ENCODE measurements at regions of chr5 and their contacts with region 1.

Region 1: DNA sequence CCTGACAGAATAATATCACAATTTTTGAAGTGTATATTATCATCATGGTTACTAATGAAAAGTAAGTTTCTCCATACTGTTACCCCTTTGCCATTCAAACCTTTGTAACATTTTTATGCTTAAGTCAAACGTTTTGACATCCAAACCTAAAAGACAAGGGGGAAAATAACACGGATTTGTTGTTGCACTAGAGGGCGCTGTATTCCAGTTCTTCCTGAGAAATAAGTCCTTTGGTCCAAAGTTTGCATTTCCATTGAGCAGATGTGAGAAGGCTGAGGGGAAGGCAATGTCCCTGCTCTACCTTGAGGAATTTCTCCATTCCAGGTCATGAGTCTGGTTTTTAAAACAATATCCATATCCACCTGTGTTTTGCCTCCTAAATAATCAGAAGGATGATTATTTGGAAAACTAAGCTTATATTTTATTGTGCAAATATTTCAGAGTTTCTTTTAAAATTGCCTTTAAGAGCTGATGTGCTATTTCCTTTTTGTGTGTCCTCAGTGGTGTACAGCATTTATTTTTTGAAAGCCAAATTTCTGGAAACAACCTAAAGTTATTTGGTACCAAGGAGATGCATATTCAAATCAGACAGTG is 9.7 kb downstream of the LECT2 start:
- DNase-seq: peak; percentile 49
- H3K4me3 Mint-ChIP-seq: no peak overlapping the region
- H3K27ac Mint-ChIP-seq: no peak overlapping the region
- H3K4me1 Mint-ChIP-seq: no peaks in the 10 kb centered on the region
- H3K27me3 Mint-ChIP-seq: peaks cover 10% of the 10 kb centered on the region

Region 2: DNA sequence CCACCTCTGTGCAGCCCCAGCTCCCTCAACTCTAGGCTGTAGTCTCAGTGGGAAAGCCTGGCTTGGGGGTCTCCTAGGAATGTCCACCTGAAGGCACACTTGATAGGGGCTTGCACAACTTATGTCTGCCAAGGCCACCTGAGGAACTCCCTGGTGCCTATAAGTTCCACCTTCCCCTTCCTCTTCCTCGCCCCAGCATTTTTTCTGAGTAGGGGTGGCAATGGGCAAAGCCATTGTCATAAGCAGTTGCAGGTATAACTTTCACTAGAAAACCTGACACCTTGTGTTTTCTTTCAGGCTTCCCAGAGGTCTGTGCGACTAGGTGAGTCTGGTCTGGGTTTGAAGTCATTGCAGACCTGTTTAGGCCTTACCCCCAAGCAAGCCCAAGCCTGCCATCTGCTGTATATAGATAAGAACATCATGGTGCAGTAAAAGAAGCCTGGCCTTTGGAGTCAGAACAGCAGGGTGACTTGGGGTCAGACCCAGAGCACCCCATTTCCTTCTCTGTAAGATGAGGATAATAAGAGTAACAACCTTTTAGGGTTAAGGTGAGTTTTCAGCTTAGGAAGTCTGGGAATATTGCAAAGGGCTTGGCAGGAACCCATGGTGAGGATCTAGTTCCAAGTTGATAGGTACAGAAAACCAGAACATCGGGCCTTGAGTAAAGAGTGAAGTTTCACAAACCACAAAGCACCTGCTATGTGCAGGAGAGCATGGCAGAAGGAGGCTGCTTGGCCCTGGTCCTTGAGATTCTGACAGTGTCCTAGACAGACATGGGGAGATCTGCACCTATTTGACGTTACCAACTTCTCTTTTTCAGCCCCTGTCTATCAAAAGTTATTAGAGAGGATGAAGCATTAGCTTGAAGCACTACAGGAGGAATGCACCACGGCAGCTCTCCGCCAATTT is 117.6 kb after region 1 on chr5:
- CTCF ChIA-PET with region 1: no interaction called
- intact Hi-C with region 1: loop called (anchors 1 kb)
- DNase-seq: peak; percentile 17
- H3K4me3 Mint-ChIP-seq: no peak overlapping the region
- H3K27ac Mint-ChIP-seq: no peak overlapping the region
- H3K4me1 Mint-ChIP-seq: no peaks in the 10 kb centered on the region
- H3K27me3 Mint-ChIP-seq: no peaks in the 10 kb centered on the region

Region 3: GRCh38 chr5:136080483-136081216 is 135.6 kb after region 1 on chr5:
- CTCF ChIA-PET with region 1: no interaction called
- intact Hi-C with region 1: loop called (anchors 1 kb)
- DNase-seq: peak; percentile 62
- H3K4me3 Mint-ChIP-seq: peak overlapping the region; percentile 12
- H3K27ac Mint-ChIP-seq: no peak overlapping the region
- H3K4me1 Mint-ChIP-seq: peaks cover 2% of the 10 kb centered on the region
- H3K27me3 Mint-ChIP-seq: peaks cover 23% of the 10 kb centered on the region

Region 4: DNA sequence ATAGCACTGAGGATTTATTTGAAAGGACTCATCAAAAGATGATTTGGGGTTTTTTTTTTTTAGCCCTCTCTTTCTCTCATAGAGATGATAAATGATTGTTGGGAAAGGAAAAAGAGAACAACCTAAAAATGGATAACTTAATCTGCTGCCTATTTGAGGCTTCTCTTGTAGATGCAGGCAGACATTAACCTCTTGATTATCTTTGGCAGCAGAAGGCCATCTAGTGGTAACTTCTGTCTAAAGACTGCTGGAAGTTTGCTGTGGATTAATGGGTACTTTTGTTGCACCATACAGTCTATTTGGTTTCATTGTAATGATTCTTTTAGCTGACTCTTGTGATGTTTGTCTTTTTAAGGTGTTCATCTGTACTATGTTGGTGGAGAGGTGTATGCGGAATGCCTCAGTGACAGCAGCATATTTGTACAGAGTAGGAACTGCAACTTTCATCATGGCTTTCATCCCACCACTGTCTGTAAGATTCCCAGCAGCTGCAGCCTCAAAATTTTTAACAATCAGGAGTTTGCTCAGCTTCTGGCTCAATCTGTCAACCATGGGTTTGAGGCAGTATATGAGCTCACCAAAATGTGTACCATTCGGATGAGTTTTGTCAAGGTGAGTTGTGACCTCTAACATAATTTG is 229.1 kb after region 1 on chr5:
- CTCF ChIA-PET with region 1: interaction called, 3 read pairs
- intact Hi-C with region 1: loop called (anchors 1 kb)
- DNase-seq: no peak
- H3K4me3 Mint-ChIP-seq: no peak overlapping the region
- H3K27ac Mint-ChIP-seq: no peak overlapping the region
- H3K4me1 Mint-ChIP-seq: no peaks in the 10 kb centered on the region
- H3K27me3 Mint-ChIP-seq: peaks cover 4% of the 10 kb centered on the region